Activated CD4-positive, alpha-beta T cell treated with anti-CD3 and anti-CD28 coated beads, Interleukin-2, amount 10 ng/mL, durations not matched to agents 24 days and 14 days (primary cell): ENCODE measurements at regions of chr5 and their contacts with region 1.

Region 1: DNA sequence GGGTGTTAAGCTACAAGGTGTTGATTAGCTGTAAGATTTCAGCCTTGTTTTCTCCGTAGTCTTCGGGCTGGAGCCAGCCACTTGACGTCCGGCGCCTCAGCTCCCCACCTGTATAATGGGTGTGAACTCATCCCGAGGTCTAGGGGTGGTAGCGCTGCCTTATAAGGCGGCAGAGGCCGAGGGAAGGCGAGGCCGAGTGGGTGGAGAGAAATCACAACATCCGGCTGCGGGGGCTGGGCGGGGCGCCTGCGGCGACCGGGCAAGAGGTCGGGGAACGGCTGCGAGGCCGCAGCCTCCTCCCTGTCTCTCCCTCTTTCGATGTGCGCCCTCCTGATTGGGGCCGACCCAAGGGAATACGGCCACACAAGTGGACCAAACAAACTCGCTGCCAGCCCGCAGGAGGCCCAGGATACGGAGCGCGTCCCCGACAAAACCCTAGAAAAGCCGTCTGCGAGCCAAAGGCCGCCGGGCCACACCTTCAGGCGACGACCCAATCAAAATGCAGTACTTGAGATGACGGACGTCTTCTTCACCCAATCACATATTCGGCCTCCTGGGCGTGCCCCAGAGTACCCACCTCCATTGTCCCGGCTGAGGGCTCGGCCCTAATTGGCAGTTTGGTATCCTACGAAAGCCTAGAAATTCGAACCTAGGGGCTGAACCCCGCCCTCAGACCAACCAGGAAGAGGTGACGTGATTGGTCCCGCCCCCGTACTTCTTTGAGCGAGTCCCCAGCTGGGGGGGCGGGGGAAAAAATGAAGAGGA is 493 bp upstream of the GRK6 start:
- DNase-seq: peak; percentile 100
- H3K4me3 Mint-ChIP-seq: peak overlapping the region; percentile 93
- H3K27ac Mint-ChIP-seq: peak overlapping the region; percentile 98
- H3K4me1 Mint-ChIP-seq: peaks cover 52% of the 10 kb centered on the region
- H3K27me3 Mint-ChIP-seq: no peaks in the 10 kb centered on the region

Region 2: DNA sequence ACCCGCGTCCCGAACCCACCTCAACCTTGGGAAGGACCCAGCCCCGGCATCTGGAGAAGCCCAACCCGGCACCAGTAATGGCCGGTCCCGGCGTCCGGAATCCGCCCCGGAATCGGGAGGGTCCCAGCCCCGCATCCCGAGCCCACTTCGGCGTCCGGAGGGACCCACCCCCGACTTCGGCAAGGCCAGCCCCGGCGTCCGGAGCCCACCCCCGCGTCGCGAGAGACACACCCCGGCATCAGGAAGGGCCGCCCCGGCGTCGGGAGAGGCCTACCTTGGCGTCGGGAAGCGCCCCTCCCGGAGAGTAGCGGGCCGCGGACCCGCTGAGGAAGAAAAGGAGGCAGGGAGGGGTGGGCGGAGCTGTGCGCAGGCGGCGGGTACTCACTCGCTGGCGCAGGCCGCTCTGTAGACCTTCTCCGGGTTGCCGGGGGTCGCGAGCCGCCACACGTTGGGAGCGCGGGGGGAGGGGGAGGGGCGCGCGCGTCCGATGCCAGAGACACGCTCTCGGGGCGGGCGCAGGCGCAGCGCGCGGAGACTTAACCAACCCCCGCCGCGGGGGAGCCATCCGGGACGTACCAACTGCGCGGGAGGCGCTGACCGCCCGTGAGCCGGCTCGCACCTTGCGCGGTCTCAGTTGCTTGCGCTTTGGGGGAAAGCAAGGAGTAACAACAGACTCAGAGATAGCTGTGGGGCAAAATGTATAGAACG is 419.6 kb before region 1 on chr5 and contains the start of gene UIMC1:
- intact Hi-C with region 1: loop called (anchors 5 kb)
- DNase-seq: peak; percentile 98
- H3K4me3 Mint-ChIP-seq: peak within 1 kb of the TSS; percentile 96
- H3K27ac Mint-ChIP-seq: peak within 1 kb of the TSS; percentile 92
- H3K4me1 Mint-ChIP-seq: peaks cover 16% of the 10 kb centered on the region
- H3K27me3 Mint-ChIP-seq: no peaks in the 10 kb centered on the region
- total RNA-seq, gene UIMC1: 65.2 and 68.5 TPM in 2 replicates

Region 3: GRCh38 chr5:177390363-177391300 is 35.4 kb before region 1 on chr5:
- intact Hi-C with region 1: loop called (anchors 1 kb)
- DNase-seq: peak; percentile 96
- H3K4me3 Mint-ChIP-seq: no peak overlapping the region
- H3K27ac Mint-ChIP-seq: peak overlapping the region; percentile 73
- H3K4me1 Mint-ChIP-seq: peaks cover 33% of the 10 kb centered on the region
- H3K27me3 Mint-ChIP-seq: peaks cover 7% of the 10 kb centered on the region

Region 4: GRCh38 chr5:177446200-177447065 is 20.4 kb after region 1 on chr5 and contains the start of gene PRR7:
- intact Hi-C with region 1: loop called (anchors 1 kb)
- DNase-seq: peak; percentile 91
- H3K4me3 Mint-ChIP-seq: peak within 1 kb of the TSS; percentile 81
- H3K27ac Mint-ChIP-seq: peak within 1 kb of the TSS; percentile 87
- H3K4me1 Mint-ChIP-seq: peaks cover 33% of the 10 kb centered on the region
- H3K27me3 Mint-ChIP-seq: peaks cover 9% of the 10 kb centered on the region
- total RNA-seq, gene PRR7: 13.6 TPM in 2 replicates

Region 5: DNA sequence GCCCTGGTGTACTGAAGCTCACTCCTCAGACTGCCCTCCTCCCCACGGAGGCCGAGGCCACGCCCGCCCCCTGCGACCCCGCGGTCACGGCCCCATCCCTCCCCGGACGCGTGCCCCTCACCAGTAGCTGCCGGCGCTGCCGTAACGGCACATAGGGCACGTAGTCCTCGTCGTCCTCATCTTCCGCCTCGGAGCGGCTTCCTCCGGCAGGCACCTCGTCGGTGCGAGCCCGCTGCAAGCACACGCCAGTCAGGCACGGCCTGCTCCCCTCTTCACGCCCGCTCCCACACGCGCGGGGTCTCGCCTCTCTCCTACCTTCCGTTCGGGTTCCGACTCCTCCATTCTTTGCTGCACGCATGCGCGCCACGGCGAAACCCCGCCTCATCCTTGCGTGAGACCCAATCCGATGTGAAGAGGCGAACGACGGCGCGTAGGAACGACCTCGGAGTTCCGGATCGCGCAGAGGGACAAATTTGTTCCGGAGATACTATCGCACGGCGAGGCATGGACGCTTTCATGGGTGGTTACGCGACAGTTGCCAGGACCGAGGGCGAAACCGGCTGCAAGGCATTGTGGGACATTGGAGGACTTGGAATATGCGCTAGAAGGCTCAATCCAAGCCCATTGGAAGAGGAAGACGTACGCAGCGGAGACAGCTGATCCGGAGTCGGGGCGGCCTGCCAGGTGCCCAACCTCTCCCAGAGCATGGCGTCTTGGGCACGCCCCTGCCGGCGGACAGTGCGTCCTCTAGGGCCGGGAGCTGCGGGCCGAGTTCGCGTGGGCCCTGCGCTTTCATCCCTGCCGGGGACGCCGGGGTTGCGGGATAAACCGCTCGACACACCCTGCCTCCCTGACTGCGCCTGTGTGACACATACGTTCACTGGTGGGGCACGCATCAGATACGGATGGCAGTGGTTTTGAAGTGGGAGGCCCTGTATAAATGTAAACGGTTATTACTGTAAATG is 90.9 kb after region 1 on chr5 and contains the start of gene DDX41:
- intact Hi-C with region 1: loop called (anchors 1 kb)
- DNase-seq: peak; percentile 99
- H3K4me3 Mint-ChIP-seq: peak within 1 kb of the TSS; percentile 91
- H3K27ac Mint-ChIP-seq: peak within 1 kb of the TSS; percentile 92
- H3K4me1 Mint-ChIP-seq: peaks cover 32% of the 10 kb centered on the region
- H3K27me3 Mint-ChIP-seq: no peaks in the 10 kb centered on the region
- total RNA-seq, gene DDX41: 157 and 172 TPM in 2 replicates

Region 6: GRCh38 chr5:177529247-177530203 is 103.5 kb after region 1 on chr5:
- intact Hi-C with region 1: no loop called
- DNase-seq: no peak
- H3K4me3 Mint-ChIP-seq: no peak overlapping the region
- H3K27ac Mint-ChIP-seq: peak overlapping the region; percentile 23
- H3K4me1 Mint-ChIP-seq: no peaks in the 10 kb centered on the region
- H3K27me3 Mint-ChIP-seq: no peaks in the 10 kb centered on the region